BJ (cell line): ENCODE measurements at regions of chr10 and their contacts with region 1.

Region 1: GRCh38 chr10:93515071-93516005 is 18.9 kb downstream of the CEP55 start:
- DNase-seq: no peak
- H3K4me3 ChIP-seq: no peak overlapping the region
- H3K27me3 ChIP-seq: no peaks in the 10 kb centered on the region
- CTCF ChIP-seq: no peak

Region 2: DNA sequence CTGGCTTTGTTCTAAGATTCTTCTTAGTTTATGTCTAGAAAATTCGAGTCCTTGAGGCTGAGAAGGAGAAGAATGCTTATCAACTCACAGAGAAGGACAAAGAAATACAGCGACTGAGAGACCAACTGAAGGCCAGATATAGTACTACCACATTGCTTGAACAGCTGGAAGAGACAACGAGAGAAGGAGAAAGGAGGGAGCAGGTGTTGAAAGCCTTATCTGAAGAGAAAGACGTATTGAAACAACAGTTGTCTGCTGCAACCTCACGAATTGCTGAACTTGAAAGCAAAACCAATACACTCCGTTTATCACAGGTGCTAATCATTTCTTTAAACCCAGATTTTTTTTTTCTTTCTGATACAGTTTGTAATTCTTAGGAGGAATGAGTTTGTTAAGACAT is 12.3 kb before region 1 on chr10:
- CTCF ChIA-PET with region 1: interaction called, 21 read pairs
- POLR2A ChIA-PET with region 1: no interaction called
- DNase-seq: no peak
- H3K4me3 ChIP-seq: no peak overlapping the region
- H3K27me3 ChIP-seq: no peaks in the 10 kb centered on the region
- CTCF ChIP-seq: no peak

Region 3: GRCh38 chr10:93541402-93542357 is 26.3 kb after region 1 on chr10:
- CTCF ChIA-PET with region 1: interaction called, 10 read pairs
- POLR2A ChIA-PET with region 1: no interaction called
- DNase-seq: no peak
- H3K4me3 ChIP-seq: 0 out of 2 replicates have a peak overlapping the region, but pooled peaks have one; percentile 4
- H3K27me3 ChIP-seq: no peaks in the 10 kb centered on the region
- CTCF ChIP-seq: peak; percentile 95

Region 4: GRCh38 chr10:93702211-93703001 is 187.1 kb after region 1 on chr10 and contains the start of gene FRA10AC1:
- CTCF ChIA-PET with region 1: no interaction called
- POLR2A ChIA-PET with region 1: no interaction called
- DNase-seq: no peak
- H3K4me3 ChIP-seq: peak within 1 kb of the TSS; percentile 50
- H3K27me3 ChIP-seq: no peaks in the 10 kb centered on the region; the same call in 1 of the 2 replicates
- CTCF ChIP-seq: peak; percentile 43
- polyA plus RNA-seq, gene FRA10AC1: 2.1 and 5.1 TPM in 2 replicates